ENCODE measurements at regions of chr6 and their contacts with region 1.

Region 1: GRCh38 chr6:13711733-13712598 is at the start of gene RANBP9:
- DNase-seq: peak; percentile 85 to 92 (median 88)
- H3K4me3 ChIP-seq: peak within 1 kb of the TSS; percentile 88 to 93 (median 90)
- H3K27ac ChIP-seq: peak within 1 kb of the TSS; percentile 64 to 95 (median 93)
- H3K4me1 ChIP-seq: peaks cover 16 to 20% of the 10 kb centered on the region in 2 donors
- H3K27me3 ChIP-seq: no peaks in the 10 kb centered on the region
- CTCF ChIP-seq: peak in 1 of 6 experiments; percentile 2
- POLR2A ChIP-seq: peak; percentile 6 to 78
- total RNA-seq, gene RANBP9: 30.8 to 63.1 (median 38.7) TPM

Region 2: GRCh38 chr6:13614926-13615798 is 96.8 kb before region 1 on chr6 and contains the start of gene NOL7:
- intact Hi-C with region 1: loop called (anchors 5 kb)
- DNase-seq: peak; percentile 98 to 99 (median 98)
- H3K4me3 ChIP-seq: peak within 1 kb of the TSS; percentile 53 to 83 (median 70)
- H3K27ac ChIP-seq: peak within 1 kb of the TSS; percentile 58 to 93 (median 91)
- H3K4me1 ChIP-seq: peaks cover 10 to 27% of the 10 kb centered on the region in 2 donors
- H3K27me3 ChIP-seq: no peaks in the 10 kb centered on the region
- CTCF ChIP-seq: peak; percentile 79 to 98 (median 92)
- POLR2A ChIP-seq: peak; percentile 78 to 81
- total RNA-seq, gene NOL7: 58.5 to 104 (median 75.1) TPM

Region 3: DNA sequence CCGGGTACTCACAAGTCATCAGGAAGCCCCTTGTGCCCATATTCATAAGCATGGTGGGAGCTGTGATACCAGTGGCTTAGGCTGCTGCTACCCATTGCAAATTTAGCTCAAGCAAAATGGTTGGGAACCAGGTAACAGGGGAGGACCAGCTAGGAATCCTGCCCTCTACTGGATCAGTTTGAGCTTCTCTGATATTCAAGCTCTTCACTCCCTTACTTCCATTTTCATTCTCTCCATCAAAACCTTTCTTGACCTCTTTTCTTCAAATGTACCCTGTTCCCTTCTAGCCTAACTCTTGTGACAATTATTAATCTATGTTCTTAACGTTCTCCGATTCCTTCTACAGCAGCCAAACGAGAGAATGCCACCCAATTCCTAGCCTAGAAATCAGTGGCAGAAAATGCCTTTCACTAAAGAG is 87.1 kb before region 1 on chr6:
- intact Hi-C with region 1: loop called in 1 of 2 experiments (anchors 5 kb)
- DNase-seq: peak in 1 of 7 donors; percentile 23
- H3K4me3 ChIP-seq: no peak overlapping the region
- H3K27ac ChIP-seq: no peak overlapping the region
- H3K4me1 ChIP-seq: peaks cover 0 to 7% of the 10 kb centered on the region in 2 donors
- H3K27me3 ChIP-seq: no peaks in the 10 kb centered on the region
- CTCF ChIP-seq: peak in 5 of 6 experiments; percentile 15 to 42 (median 23)
- POLR2A ChIP-seq: no peak

Region 4: GRCh38 chr6:13666194-13667105 is 45.5 kb before region 1 on chr6:
- intact Hi-C with region 1: no loop called
- DNase-seq: no peak
- H3K4me3 ChIP-seq: no peak overlapping the region
- H3K27ac ChIP-seq: no peak overlapping the region
- H3K4me1 ChIP-seq: peaks cover 12 to 47% of the 10 kb centered on the region in 2 donors
- H3K27me3 ChIP-seq: no peaks in the 10 kb centered on the region
- CTCF ChIP-seq: no peak
- POLR2A ChIP-seq: no peak

Region 5: DNA sequence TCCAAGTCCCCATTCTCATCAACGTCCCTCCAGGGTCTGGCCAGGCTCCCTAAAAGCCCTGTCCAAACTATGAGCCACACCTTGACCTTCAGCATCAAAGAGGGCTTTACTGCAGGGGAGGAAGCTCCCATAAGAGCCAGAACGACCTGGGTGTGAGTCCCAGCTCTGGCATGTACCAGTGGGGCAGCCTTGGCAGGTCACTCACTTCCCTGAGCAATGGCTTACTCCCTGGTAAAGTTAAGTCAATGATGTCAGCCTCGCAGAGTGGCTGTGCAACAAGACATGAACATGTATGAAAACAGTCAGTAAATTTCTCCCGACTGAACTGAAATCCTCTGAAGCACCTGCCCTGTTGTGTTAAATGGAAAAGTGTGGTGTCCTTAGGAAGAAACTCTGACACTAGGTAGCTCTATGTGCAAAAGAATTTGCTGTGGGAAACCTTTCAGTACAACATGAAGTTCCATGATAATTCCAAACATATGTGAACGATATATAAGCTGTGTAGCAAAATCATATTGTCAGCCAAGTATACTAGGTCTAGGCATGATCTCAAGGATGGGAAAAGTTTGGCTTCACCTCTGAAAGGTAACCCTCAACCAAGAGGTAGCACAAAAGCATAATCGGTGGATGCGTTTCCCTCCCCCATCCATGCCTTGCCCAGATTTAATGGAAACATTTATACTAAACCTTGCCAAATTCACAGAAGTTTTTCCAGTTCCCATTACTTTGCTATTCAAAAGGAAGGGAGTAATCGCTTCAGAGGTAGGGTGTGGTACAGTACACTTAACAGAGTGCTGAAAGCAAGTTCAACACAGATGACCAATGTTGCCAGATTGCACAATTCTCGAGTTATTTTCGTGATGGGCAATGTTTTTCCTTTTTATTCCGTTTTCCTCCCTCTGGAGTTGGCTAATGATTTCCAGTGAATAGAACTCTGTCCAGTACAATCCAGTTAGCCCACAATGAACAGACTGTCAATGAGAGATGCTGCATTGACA is 48.6 kb after region 1 on chr6:
- intact Hi-C with region 1: no loop called
- DNase-seq: no peak
- H3K4me3 ChIP-seq: no peak overlapping the region
- H3K27ac ChIP-seq: no peak overlapping the region
- H3K4me1 ChIP-seq: no peaks in the 10 kb centered on the region
- H3K27me3 ChIP-seq: no peaks in the 10 kb centered on the region
- CTCF ChIP-seq: no peak
- POLR2A ChIP-seq: no peak